Esophagus muscularis mucosa (tissue), 4 donors: ENCODE measurements at regions of chr6 and their contacts with region 1.

Region 1: GRCh38 chr6:128731249-128732165 is 151.4 kb upstream of the LAMA2 start:
- DNase-seq: no peak
- H3K4me3 ChIP-seq: no peak overlapping the region
- H3K27ac ChIP-seq: no peak overlapping the region
- H3K4me1 ChIP-seq: no peaks in the 10 kb centered on the region
- H3K27me3 ChIP-seq: no peaks in the 10 kb centered on the region
- CTCF ChIP-seq: peak in 2 of 3 experiments; percentile 36 to 41
- EP300 ChIP-seq: no peak
- POLR2A ChIP-seq: no peak

Region 2: GRCh38 chr6:127737009-127737486 is 994.5 kb before region 1 on chr6:
- intact Hi-C with region 1: loop called (anchors 5 kb)
- DNase-seq: no peak
- H3K4me3 ChIP-seq: no peak overlapping the region
- H3K27ac ChIP-seq: no peak overlapping the region
- H3K4me1 ChIP-seq: no peaks in the 10 kb centered on the region
- H3K27me3 ChIP-seq: no peaks in the 10 kb centered on the region
- CTCF ChIP-seq: peak; percentile 48 to 65 (median 55)
- EP300 ChIP-seq: no peak
- POLR2A ChIP-seq: no peak

Region 3: GRCh38 chr6:128782996-128783395 is 51.5 kb after region 1 on chr6:
- intact Hi-C with region 1: no loop called
- DNase-seq: no peak
- H3K4me3 ChIP-seq: no peak overlapping the region
- H3K27ac ChIP-seq: no peak overlapping the region
- H3K4me1 ChIP-seq: no peaks in the 10 kb centered on the region
- H3K27me3 ChIP-seq: no peaks in the 10 kb centered on the region
- CTCF ChIP-seq: no peak
- EP300 ChIP-seq: no peak
- POLR2A ChIP-seq: no peak

Region 4: GRCh38 chr6:128855581-128856085 is 124.1 kb after region 1 on chr6:
- intact Hi-C with region 1: no loop called
- DNase-seq: no peak
- H3K4me3 ChIP-seq: no peak overlapping the region
- H3K27ac ChIP-seq: no peak overlapping the region
- H3K4me1 ChIP-seq: no peaks in the 10 kb centered on the region
- H3K27me3 ChIP-seq: no peaks in the 10 kb centered on the region
- CTCF ChIP-seq: no peak
- EP300 ChIP-seq: no peak
- POLR2A ChIP-seq: no peak